PC-9 (cell line): ENCODE measurements at regions of chr11 and their contacts with region 1.

Region 1: GRCh38 chr11:65274735-65275682 is 13.2 kb downstream of the POLA2 start:
- DNase-seq: peak; percentile 89 to 97
- H3K4me3 ChIP-seq: no peak overlapping the region
- H3K27ac ChIP-seq: peak overlapping the region; percentile 60
- H3K4me1 ChIP-seq: peaks cover 39% of the 10 kb centered on the region
- H3K27me3 ChIP-seq: no peaks in the 10 kb centered on the region
- CTCF ChIP-seq: peak; percentile 95

Region 2: DNA sequence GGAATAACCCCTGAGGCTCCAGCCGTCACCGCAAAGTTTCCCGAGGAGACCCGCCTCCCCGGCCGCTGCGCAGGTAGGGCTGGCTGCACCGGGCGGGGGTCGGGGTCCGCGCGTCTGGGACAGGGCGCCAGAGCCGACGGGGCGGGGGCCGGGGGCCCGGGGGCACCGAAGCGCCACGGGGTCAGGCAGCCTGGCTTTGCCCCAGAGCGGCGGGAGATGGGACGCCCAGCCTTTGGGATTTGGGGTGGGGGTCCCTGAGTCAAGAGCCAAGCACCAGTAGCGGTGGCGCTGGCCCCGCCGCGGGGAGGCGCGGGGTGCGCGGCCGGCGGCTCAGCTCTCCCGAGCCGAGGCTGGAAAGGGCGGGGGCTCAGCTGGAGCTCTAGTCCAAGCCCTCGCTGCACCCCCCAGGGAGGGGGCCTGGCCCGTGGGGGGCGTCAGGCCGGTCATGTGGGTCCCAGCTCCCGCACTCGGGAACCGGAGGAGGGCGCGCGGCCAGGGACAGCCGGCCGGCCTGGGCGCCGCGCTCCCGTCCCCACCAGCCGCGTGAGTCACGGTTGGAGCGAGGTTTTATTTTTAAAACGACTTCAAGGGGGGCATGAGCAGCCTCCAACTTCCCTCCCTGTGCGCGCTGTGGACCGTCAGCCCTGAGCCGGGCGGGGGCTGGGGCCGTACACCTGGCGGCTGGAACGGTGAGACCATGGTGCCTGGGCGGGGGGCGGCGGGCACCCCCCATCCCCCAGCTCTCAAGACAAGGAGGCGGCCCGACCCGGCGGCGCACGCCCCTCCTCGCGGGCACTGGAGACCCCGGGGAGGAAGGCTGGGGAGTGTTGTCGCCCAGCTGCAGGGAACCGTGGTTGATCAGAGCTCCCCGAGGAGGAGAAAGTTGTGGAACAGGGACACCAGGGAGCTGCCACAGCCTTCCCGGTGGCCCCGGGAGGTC is 1238.7 kb before region 1 on chr11:
- CTCF ChIA-PET with region 1: no interaction called
- POLR2A ChIA-PET with region 1: no interaction called
- intact Hi-C with region 1: no loop called
- DNase-seq: no peak
- H3K4me3 ChIP-seq: no peak overlapping the region
- H3K27ac ChIP-seq: no peak overlapping the region
- H3K4me1 ChIP-seq: no peaks in the 10 kb centered on the region
- H3K27me3 ChIP-seq: no peaks in the 10 kb centered on the region
- CTCF ChIP-seq: no peak

Region 3: GRCh38 chr11:65095974-65096806 is 178.8 kb before region 1 on chr11 and contains the start of gene VPS51:
- CTCF ChIA-PET with region 1: interaction called, 12 read pairs
- POLR2A ChIA-PET with region 1: no interaction called
- intact Hi-C with region 1: no loop called
- DNase-seq: peak; percentile 84 to 89
- H3K4me3 ChIP-seq: peak within 1 kb of the TSS; percentile 85
- H3K27ac ChIP-seq: peak within 1 kb of the TSS; percentile 63
- H3K4me1 ChIP-seq: peaks cover 20% of the 10 kb centered on the region
- H3K27me3 ChIP-seq: no peaks in the 10 kb centered on the region
- CTCF ChIP-seq: no peak
- total RNA-seq, gene VPS51: 113 and 279 TPM in 2 replicates

Region 4: GRCh38 chr11:65290448-65291165 is 15.6 kb after region 1 on chr11:
- CTCF ChIA-PET with region 1: interaction called, 35 read pairs
- POLR2A ChIA-PET with region 1: interaction called, 22 read pairs
- intact Hi-C with region 1: loop called (anchors 1 kb)
- DNase-seq: peak; percentile 32 to 52
- H3K4me3 ChIP-seq: no peak overlapping the region
- H3K27ac ChIP-seq: peak overlapping the region; percentile 92
- H3K4me1 ChIP-seq: peaks cover 34% of the 10 kb centered on the region
- H3K27me3 ChIP-seq: no peaks in the 10 kb centered on the region
- CTCF ChIP-seq: no peak

Region 5: GRCh38 chr11:65338676-65339075 is 63.7 kb after region 1 on chr11:
- CTCF ChIA-PET with region 1: interaction called, 32 read pairs
- POLR2A ChIA-PET with region 1: interaction called, 8 read pairs
- intact Hi-C with region 1: no loop called
- DNase-seq: no peak
- H3K4me3 ChIP-seq: no peak overlapping the region
- H3K27ac ChIP-seq: no peak overlapping the region
- H3K4me1 ChIP-seq: peaks cover 12% of the 10 kb centered on the region
- H3K27me3 ChIP-seq: no peaks in the 10 kb centered on the region
- CTCF ChIP-seq: no peak

Region 6: GRCh38 chr11:65471410-65471762 is 196.4 kb after region 1 on chr11:
- CTCF ChIA-PET with region 1: interaction called, 15 read pairs
- POLR2A ChIA-PET with region 1: no interaction called
- intact Hi-C with region 1: no loop called
- DNase-seq: peak; percentile 61 to 78
- H3K4me3 ChIP-seq: no peak overlapping the region
- H3K27ac ChIP-seq: peak overlapping the region; percentile 95
- H3K4me1 ChIP-seq: peaks cover 66% of the 10 kb centered on the region
- H3K27me3 ChIP-seq: no peaks in the 10 kb centered on the region
- CTCF ChIP-seq: peak; percentile 61

Region 7: DNA sequence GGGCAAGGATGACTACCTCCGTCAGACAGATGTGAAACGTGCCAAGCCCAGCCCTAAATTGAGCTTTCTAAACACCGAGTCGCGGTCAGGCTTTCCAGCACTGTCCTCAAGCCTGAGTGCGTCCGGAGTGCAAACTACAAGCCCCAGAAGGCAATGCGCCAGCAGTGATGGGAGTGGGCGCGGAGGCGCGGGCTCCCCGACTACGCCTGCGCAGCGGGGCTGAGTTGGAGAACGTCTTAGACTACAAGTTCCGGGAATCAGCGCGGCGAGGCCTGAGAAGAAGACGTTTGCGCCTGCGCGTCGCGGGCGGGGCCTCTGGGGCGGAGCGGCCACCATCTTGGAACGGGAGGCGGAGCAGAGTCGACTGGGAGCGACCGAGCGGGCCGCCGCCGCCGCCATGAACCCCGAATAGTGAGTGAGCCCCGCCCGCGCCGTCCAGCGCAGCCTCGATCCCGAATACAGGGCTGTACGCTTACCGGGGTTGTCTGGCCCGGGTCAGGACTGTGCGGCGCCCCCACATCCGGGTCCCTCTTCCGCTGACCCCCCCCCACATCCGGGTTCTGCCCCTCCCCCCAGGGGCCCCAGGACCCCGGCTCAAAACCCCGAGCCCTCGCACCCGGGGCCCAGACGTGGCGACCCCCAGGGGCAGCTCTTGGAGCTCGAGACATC is 993.4 kb after region 1 on chr11 and contains the start of gene RAB1B:
- CTCF ChIA-PET with region 1: interaction called, 17 read pairs
- POLR2A ChIA-PET with region 1: no interaction called
- intact Hi-C with region 1: no loop called
- DNase-seq: peak; percentile 98 to 100
- H3K4me3 ChIP-seq: peak within 1 kb of the TSS; percentile 95
- H3K27ac ChIP-seq: peak within 1 kb of the TSS; percentile 57
- H3K4me1 ChIP-seq: peaks cover 8% of the 10 kb centered on the region
- H3K27me3 ChIP-seq: no peaks in the 10 kb centered on the region
- CTCF ChIP-seq: no peak
- total RNA-seq, gene RAB1B: 209 and 232 TPM in 2 replicates